K562 (cell line): ENCODE measurements at regions of chr19 and their contacts with region 1.

Region 1: DNA sequence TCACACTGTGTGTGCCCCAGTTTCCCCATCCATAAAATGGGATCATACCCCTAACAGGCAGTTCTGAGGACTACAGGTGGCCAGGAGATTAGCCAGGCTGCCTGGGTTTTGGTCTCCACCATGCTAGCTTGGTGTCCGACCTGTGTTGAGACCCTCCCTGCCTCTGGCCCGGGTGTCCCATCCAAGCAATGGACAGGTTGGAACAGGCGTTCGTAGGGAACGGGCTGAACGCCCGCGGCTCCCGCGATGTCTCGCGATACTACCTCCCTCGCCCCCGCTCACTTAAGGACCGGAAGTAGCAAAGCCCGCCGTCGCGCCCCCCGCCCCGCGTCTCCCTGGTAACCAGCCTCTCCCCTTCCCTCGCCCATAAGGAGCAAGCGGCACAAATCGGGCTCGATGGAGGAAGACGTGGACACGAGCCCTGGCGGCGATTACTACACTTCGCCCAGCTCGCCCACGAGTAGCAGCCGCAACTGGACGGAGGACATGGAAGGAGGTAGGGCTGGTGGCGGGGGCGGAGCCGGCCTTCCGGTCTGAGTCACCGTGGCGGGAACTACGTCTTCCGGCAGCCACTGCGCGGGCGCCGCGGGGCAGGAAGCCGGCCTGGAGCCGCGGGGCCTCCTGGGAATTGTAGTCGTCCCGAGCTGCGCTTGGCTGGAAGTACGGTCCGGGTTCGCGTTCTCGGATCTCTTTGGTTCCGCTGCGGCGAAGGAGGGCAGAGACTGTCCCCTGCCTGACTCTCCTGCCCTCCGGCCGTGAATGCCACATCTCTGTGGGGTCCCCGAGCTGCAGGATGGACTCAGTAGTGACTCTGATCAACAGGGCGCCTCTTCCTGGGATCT is 45.4 kb downstream of the SMIM24 start:
- DNase-seq: peak; percentile 96 to 97 (median 97)
- ATAC-seq: peak; percentile 99
- H3K4me3 ChIP-seq: peak overlapping the region; percentile 53
- H3K27ac ChIP-seq: peak overlapping the region; percentile 96
- H3K4me1 ChIP-seq: peaks cover 4 to 20% of the 10 kb centered on the region in 2 experiments; a peak in 4 of 5 replicates
- H3K27me3 ChIP-seq: no peaks in the 10 kb centered on the region
- CTCF ChIP-seq: no peak
- EP300 ChIP-seq: no peak; the same call in 1 of the 2 replicates
- POLR2A ChIP-seq: peak; percentile 82
- RAD21 ChIP-seq: no peak

Region 2: DNA sequence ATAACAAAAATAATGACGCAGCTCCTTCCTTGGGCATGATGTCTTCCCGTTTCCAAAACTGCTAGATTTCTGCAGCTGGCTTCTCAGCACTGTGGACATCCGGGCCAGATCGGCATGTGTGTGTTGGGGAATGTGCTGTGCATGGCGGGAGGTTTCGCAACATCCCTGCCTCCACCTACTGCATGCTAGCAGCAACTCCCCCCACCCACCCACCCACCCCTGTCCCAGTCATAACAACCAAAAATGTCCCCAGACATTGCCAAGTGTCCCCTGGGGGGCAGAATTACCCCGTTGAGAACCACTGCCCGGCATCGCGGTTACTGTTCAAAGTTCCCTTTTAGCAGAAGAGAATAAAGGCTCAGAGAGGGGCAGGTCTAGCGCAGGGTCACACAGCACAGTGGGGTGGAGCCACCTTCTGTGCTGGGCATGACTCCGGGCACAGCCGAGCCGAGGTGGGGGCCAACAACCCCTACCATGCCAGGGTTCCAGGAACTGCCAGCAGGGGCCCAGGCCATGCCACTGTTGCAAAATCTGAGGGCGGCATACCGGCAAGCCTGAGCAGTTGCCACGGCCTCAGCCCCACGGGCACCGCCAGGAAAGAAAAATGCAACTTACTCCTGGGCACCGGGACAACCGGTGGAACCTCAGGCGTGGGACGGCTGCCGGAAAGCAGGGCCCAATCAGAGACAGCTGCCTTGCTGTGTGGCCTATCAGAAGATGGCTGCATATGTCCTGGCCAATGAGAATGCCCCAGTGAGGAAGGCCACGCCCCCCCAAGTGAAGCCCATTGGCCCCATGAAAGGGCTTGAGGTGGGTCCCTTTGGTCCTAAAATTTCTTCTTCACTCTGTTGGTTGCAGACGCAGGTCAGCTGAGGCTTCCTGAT is 91.1 kb before region 1 on chr19:
- CTCF ChIA-PET with region 1: interaction called, 3 read pairs
- POLR2A ChIA-PET with region 1: no interaction called
- in situ Hi-C with region 1: loop called (anchors 5 kb)
- intact Hi-C with region 1: no loop called
- DNase-seq: peak; percentile 69 to 95 (median 92)
- ATAC-seq: peak; percentile 96
- H3K4me3 ChIP-seq: no peak overlapping the region
- H3K27ac ChIP-seq: no peak overlapping the region
- H3K4me1 ChIP-seq: peaks cover 0 to 32% of the 10 kb centered on the region in 2 experiments; a peak in 3 of 5 replicates
- H3K27me3 ChIP-seq: no peaks in the 10 kb centered on the region
- CTCF ChIP-seq: peak; percentile 9 to 54 (median 36); a peak in 3 of 6 replicates
- EP300 ChIP-seq: no peak
- POLR2A ChIP-seq: no peak
- RAD21 ChIP-seq: peak in 1 of 2 experiments; percentile 52; a peak in 2 of 4 replicates

Region 3: DNA sequence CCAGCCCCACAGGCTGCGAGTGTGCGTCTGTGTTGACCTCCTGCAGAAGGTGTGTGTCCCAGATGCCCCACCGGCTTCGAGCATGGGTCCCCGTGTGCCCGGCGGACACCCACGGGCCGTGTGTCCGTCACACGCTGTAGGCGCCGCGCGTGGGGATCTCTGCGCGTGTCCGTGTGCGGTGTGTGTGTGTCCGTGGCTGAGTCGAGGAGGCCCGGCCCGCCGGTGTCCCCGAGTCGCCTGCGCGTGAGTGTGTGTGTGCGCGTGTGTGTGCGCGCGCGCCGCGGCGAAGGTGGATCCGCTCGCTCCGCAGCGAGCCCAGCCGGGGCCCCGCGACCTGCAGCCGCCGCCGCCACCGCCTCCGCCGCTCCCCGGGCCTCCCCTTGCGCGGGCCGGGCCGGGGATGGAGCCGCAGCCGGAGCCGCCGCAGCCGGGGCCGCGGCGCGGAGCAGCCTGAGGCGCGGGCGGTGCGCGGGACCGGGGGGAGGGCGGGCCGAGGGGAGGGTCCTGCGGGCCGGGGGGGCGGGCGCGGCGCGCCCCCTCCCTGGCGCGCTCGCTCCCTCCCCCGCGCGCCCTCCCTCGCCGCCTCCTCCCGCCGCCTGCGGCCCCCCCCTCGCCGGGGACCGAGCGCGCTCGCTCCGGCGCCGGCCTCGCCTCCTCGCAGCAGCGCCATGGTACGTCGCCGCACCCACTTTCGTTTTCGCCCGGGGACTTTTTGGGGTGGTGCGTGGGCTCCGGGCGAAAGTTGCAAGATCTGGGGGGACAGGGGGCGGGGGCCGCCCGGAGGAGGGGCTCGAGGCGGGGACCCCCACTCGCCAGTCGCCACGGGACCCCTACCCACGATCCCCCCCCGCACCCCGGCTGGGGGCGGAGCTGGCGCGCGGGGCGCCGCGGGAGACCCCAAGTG is 75.7 kb before region 1 on chr19:
- CTCF ChIA-PET with region 1: no interaction called
- POLR2A ChIA-PET with region 1: no interaction called
- in situ Hi-C with region 1: no loop called
- intact Hi-C with region 1: loop called (anchors 5 kb)
- DNase-seq: peak; percentile 83 to 96 (median 94)
- ATAC-seq: peak; percentile 23
- H3K4me3 ChIP-seq: peak overlapping the region; percentile 95
- H3K27ac ChIP-seq: peak overlapping the region; percentile 96
- H3K4me1 ChIP-seq: peaks cover 35 to 51% of the 10 kb centered on the region in 2 experiments
- H3K27me3 ChIP-seq: no peaks in the 10 kb centered on the region
- CTCF ChIP-seq: no peak
- EP300 ChIP-seq: no peak
- POLR2A ChIP-seq: peak; percentile 18; the same call in 1 of the 2 replicates
- RAD21 ChIP-seq: no peak

Region 4: GRCh38 chr19:3482507-3483225 is 47.7 kb after region 1 on chr19:
- CTCF ChIA-PET with region 1: no interaction called
- POLR2A ChIA-PET with region 1: no interaction called
- in situ Hi-C with region 1: no loop called
- intact Hi-C with region 1: no loop called
- DNase-seq: peak in 3 of 4 experiments; percentile 23 to 36 (median 31)
- ATAC-seq: no peak
- H3K4me3 ChIP-seq: no peak overlapping the region
- H3K27ac ChIP-seq: no peak overlapping the region
- H3K4me1 ChIP-seq: peaks cover 11 to 45% of the 10 kb centered on the region in 2 experiments
- H3K27me3 ChIP-seq: peaks cover 21 to 27% of the 10 kb centered on the region in 2 experiments; a peak in 4 of 5 replicates
- CTCF ChIP-seq: no peak
- EP300 ChIP-seq: no peak
- POLR2A ChIP-seq: no peak
- RAD21 ChIP-seq: no peak

Region 5: DNA sequence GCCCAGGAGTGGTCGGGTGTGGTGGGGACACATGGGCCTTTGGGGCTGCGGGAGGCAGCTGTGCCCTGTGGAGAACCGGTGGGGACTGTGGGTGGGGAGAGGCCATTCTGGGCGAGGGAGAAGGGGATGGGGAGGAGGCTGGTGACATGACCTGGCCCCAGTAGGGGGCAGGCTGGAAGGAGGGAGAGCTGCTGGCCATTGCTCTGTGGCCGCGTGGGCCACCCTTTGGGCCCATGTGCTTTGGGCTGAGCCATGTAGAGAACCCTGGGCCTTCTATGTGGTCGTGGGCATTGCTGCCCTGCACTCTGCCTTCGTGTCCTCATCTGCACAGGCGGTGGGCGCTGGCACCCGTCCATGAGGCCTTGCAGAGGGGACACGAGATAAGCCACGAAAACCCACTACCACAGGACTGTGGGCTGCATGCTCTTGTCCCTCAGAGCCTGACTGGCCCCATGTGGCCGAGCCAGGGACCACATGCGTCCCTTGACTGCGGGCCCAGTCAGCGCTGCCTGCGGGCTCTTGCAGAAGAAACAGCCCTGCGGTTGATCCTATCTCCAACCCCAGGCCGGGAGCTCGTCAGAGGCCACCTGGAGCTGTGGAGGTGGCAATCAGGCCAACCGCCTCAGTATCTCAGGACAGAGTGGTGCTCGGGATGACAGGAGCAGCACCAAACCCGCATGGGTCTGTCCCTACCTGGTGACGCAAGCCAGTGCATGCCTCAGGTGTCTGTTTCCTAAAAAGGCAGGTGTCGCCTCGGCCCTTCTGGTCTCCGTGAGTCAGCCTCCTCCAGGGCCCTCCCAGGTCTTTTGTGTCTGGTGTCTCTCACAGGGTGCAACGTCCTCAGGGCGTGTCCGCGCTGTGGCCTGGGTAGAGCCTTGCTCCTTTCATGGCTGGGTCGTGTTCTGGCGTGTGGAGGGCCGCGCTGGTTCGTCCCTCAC is 85.5 kb after region 1 on chr19:
- CTCF ChIA-PET with region 1: no interaction called
- POLR2A ChIA-PET with region 1: no interaction called
- in situ Hi-C with region 1: no loop called
- intact Hi-C with region 1: no loop called
- DNase-seq: peak; percentile 86 to 94 (median 90)
- ATAC-seq: peak; percentile 97
- H3K4me3 ChIP-seq: no peak overlapping the region
- H3K27ac ChIP-seq: peak overlapping the region; percentile 86
- H3K4me1 ChIP-seq: peaks cover 19 to 76% of the 10 kb centered on the region in 2 experiments
- H3K27me3 ChIP-seq: no peaks in the 10 kb centered on the region
- CTCF ChIP-seq: peak; percentile 70 to 81 (median 72)
- EP300 ChIP-seq: peak; percentile 74
- POLR2A ChIP-seq: no peak
- RAD21 ChIP-seq: peak; percentile 57 to 76